HEK293 (cell line): ENCODE measurements at regions of chr15 and their contacts with region 1.

Region 1: GRCh38 chr15:90387537-90388461 is at the start of gene IQGAP1:
- H3K4me3 ChIP-seq: peak within 1 kb of the TSS; percentile 96
- H3K27ac ChIP-seq: peak within 1 kb of the TSS; percentile 77
- H3K4me1 ChIP-seq: peaks cover 15% of the 10 kb centered on the region
- CTCF ChIP-seq: no peak

Region 2: DNA sequence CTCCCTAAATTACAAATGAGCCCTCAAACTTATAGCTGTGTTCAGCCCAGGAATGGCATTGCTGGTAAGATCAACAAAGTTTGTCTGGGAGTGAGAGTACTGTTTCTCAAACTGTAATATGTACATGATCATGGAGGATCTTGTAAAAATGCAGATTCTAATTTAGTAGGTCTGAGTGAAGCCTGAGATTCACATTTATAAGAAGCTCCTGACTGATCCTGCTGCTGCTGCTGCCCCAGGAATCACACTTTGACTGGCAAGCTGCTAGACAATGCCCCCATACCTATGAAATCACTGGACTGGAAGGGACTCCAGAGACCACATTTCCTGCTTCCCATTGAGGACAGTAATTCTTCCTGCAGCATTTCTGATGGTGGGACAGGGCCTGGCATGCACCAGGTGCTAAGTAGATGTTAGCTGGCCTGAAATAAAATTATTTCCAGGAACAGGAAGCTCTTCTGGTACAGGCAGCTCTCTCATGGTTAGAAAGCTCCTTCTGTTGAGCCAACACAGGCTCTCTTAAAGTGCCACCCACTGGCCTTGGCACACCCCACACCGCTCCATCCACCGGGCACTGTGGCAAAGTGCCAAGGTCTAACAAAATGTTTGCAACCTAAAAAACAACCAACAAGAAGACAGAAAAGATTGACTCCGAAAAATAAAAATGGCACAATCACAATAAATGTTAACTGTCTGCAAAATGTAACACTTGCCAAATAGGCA is 423.4 kb before region 1 on chr15:
- CTCF ChIA-PET with region 1: no interaction called
- POLR2A ChIA-PET with region 1: no interaction called
- H3K4me3 ChIP-seq: no peak overlapping the region
- H3K27ac ChIP-seq: no peak overlapping the region
- H3K4me1 ChIP-seq: no peaks in the 10 kb centered on the region
- CTCF ChIP-seq: no peak

Region 3: GRCh38 chr15:90101969-90102890 is 285.6 kb before region 1 on chr15 and contains the start of gene IDH2:
- CTCF ChIA-PET with region 1: no interaction called
- POLR2A ChIA-PET with region 1: no interaction called
- H3K4me3 ChIP-seq: peak within 1 kb of the TSS; percentile 71
- H3K27ac ChIP-seq: peak within 1 kb of the TSS; percentile 92; the same call in 1 of the 2 replicates
- H3K4me1 ChIP-seq: peaks cover 9% of the 10 kb centered on the region
- CTCF ChIP-seq: no peak

Region 4: GRCh38 chr15:90184118-90184785 is 203.5 kb before region 1 on chr15:
- CTCF ChIA-PET with region 1: no interaction called
- POLR2A ChIA-PET with region 1: no interaction called
- H3K4me3 ChIP-seq: peak overlapping the region; percentile 88
- H3K27ac ChIP-seq: peak overlapping the region; percentile 44; the same call in 1 of the 2 replicates
- H3K4me1 ChIP-seq: peaks cover 10% of the 10 kb centered on the region
- CTCF ChIP-seq: no peak; the same call in 1 of the 2 replicates

Region 5: DNA sequence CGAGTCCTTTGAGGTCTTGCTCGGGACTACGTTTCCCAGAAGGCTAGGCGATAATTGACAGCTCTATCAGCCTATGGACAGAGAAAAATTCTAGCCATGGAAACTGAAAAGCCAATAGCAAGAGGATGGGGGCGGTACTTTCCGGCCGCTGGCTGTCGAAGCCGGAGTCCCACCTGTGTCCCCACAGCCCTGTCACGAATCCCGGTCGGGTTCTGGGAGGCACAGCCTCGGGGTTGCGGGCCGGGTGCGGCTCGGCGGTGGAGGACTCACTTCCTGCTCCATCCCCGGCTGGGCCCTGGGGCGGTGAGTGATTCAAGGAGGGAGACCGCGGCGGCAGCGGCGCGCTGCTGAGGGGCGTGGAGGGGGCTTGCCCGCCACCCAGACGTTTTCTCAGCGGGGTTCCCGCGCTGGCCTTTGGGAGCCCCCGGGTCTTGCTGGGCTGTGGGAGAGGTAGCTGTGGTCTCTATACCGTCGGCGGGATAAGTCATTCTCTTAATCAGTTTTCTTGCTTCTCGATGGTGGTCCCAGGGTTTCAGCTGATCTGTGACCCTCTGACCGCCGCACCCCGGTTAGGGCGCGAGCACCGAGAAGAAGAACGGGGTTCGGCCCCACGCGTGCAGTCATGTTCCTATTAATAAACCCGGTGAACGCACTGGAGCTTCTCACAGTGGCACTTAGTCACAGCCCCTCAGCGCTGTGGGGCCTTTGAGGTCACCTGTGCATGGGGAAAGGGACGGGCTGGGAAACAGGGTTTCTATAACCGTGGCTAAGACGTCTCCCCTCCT is 35.5 kb before region 1 on chr15 and contains the start of gene ZNF774:
- CTCF ChIA-PET with region 1: interaction called, 3 read pairs
- POLR2A ChIA-PET with region 1: interaction called, 17 read pairs
- H3K4me3 ChIP-seq: peak within 1 kb of the TSS; percentile 77
- H3K27ac ChIP-seq: peak within 1 kb of the TSS; percentile 45; the same call in 1 of the 2 replicates
- H3K4me1 ChIP-seq: peaks cover 2% of the 10 kb centered on the region; the same call in 1 of the 2 replicates
- CTCF ChIP-seq: no peak

Region 6: DNA sequence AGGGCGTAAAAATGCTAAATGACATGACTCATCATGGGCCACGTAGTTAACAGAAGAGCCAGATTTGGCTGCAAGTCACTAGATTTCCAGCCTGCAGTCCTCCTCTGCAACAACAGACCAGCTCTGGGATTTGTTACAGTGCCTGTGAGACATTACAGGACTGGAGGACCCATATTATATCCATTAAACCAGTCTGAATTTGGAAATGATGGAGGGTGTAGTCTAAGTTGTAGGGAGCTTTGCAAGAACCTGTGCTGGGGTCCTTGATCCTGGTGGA is 24.9 kb before region 1 on chr15:
- CTCF ChIA-PET with region 1: interaction called, 9 read pairs
- POLR2A ChIA-PET with region 1: interaction called, 10 read pairs
- H3K4me3 ChIP-seq: no peak overlapping the region
- H3K27ac ChIP-seq: no peak overlapping the region
- H3K4me1 ChIP-seq: no peaks in the 10 kb centered on the region
- CTCF ChIP-seq: no peak

Region 7: GRCh38 chr15:90376789-90377188 is 11.0 kb before region 1 on chr15:
- CTCF ChIA-PET with region 1: no interaction called
- POLR2A ChIA-PET with region 1: interaction called, 14 read pairs
- H3K4me3 ChIP-seq: no peak overlapping the region
- H3K27ac ChIP-seq: no peak overlapping the region
- H3K4me1 ChIP-seq: no peaks in the 10 kb centered on the region
- CTCF ChIP-seq: no peak

Region 8: GRCh38 chr15:90400406-90401314 is 12.9 kb after region 1 on chr15:
- CTCF ChIA-PET with region 1: interaction called, 3 read pairs
- POLR2A ChIA-PET with region 1: interaction called, 32 read pairs
- H3K4me3 ChIP-seq: no peak overlapping the region; the same call in 1 of the 2 replicates
- H3K27ac ChIP-seq: peak overlapping the region; percentile 69
- H3K4me1 ChIP-seq: peaks cover 39% of the 10 kb centered on the region
- CTCF ChIP-seq: no peak

Region 9: DNA sequence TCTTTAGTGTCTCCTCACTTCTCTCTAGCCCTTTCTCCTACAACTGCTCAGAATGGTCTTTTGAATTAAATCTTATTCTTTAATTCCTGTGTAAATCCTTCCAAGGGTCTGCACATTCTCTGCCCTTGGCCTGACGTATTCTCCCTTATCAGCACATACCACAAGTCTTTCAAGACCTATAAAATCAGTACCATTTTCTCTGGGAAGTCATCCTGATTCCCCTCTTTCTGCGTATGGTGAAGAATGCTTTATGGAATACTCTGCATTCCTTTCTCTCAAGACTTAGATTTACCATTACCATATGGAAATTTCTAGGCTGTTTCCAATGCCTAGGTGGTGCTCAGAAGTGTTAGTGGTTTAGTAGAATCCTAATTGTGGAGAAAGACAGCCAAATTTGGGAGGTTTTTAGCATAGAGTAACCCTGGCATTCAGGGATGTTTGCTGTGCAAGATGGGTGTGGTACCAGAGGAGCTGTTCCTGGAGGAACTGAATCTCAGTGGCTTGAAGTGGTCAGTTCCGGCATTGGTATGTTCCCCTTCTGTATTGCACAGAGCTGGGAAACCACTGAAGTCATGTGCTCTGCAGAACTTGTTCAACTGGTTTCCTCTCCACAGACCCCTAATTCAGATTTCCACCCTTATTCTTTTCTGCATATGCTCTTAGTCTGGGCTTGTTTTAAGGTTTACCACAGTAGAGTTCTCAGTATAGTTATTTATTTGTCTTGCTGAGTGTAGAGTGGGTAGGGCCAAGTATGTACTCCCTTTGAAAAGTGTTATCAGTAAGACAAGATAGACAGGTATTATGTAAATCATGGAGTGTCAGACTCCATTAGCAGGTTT is 24.8 kb after region 1 on chr15:
- CTCF ChIA-PET with region 1: interaction called, 3 read pairs
- POLR2A ChIA-PET with region 1: interaction called, 14 read pairs
- H3K4me3 ChIP-seq: no peak overlapping the region
- H3K27ac ChIP-seq: no peak overlapping the region
- H3K4me1 ChIP-seq: peaks cover 29% of the 10 kb centered on the region
- CTCF ChIP-seq: no peak